HCT116 (cell line): ENCODE measurements at regions of chr10 and their contacts with region 1.

Region 1: DNA sequence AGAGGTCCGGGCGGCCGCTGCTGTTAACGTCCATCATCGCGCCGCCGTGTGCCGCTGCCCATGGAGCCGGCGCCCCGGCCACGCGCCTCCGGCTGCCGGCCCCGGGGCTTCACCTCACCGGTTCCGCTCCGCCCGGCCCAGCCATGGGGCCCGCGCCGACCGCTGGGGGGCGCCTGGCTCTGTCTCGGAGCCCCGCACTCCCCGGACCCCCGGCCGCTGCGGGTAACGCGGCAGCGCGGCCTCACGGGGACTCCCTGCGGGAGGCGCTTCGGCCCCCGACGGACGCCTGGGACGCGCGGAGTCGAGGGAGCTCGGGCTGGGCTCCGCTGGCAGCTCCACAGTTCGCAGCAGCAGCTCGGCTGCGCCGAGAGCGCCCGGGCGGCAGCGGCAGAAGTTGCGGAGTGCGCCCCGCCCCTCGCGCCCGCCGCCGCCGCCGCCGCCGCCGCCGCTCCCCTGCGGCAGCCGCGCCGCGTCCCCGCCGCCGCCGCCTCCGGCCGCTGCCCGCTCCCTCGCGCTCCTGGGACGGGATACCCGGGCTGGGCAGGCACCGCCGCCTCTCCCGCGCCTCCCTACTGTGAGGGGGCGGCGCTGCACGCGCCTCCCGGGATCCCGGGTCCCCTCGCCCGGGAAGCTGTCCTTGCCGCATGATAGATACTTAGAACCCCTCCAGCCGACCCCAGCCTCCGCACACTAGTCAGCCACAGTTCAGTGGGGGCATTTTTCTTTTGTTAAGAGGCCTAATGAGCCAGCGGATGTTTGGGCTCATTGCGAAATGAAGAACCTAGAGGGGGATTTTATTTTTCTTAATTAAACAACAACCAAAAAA is at the start of gene HTR7:
- DNase-seq: no peak
- ATAC-seq: peak; percentile 79
- H3K4me3 ChIP-seq: peak within 1 kb of the TSS; percentile 68 to 76
- H3K27ac ChIP-seq: peak within 1 kb of the TSS; percentile 95
- H3K4me1 ChIP-seq: peaks cover 20 to 39% of the 10 kb centered on the region in 2 experiments
- H3K27me3 ChIP-seq: no peaks in the 10 kb centered on the region
- CTCF ChIP-seq: peak in 2 of 3 experiments; percentile 42 to 64; a peak in 4 of 6 replicates
- POLR2A ChIP-seq: no peak
- RAD21 ChIP-seq: no peak
- total RNA-seq, gene HTR7: 32.2 TPM

Region 2: GRCh38 chr10:89954787-89955566 is 902.9 kb before region 1 on chr10:
- CTCF ChIA-PET with region 1: no interaction called
- POLR2A ChIA-PET with region 1: no interaction called
- RAD21 ChIA-PET with region 1: no interaction called
- intact Hi-C with region 1: loop called (anchors 10 kb)
- DNase-seq: no peak
- ATAC-seq: no peak
- H3K4me3 ChIP-seq: no peak overlapping the region
- H3K27ac ChIP-seq: peak overlapping the region; percentile 31; the same call in 1 of the 2 replicates
- H3K4me1 ChIP-seq: peaks cover 0 to 7% of the 10 kb centered on the region in 2 experiments; a peak in 2 of 4 replicates
- H3K27me3 ChIP-seq: no peaks in the 10 kb centered on the region
- CTCF ChIP-seq: peak; percentile 18 to 64 (median 37); a peak in 4 of 6 replicates
- POLR2A ChIP-seq: no peak
- RAD21 ChIP-seq: peak; percentile 59

Region 3: DNA sequence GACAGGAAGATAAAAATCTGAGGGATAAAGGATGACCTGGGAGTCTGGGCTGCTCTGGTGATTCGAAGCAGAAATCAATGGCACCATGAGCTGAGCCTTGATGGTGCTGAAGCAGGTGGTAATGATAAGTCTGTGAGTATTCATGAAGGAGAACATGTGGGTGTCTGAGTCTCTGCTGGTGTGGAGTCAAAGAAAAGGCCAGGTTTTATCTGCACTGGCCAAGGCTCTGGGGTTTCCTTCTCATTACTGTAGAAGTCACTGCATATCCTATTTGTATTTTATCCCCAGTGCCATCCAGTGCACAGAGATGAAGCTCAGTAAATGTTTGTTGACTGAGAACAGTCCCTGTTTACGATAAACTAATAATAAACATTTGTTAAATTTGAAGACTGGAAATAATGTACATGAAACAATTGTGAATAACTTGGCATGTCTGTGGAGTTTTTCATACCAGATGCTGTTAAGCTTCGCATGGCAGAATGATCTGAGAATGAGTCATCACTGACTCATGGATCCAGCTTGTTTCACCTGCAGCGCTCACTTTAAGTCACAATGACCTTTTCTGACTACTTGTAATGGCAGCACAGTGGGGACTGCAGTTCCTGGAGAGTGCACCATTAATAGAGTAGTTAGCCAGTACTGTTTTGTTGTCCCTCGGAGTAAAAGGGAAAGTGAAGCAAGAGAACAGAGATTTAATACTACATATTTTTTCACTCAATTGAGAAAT is 538.5 kb before region 1 on chr10:
- CTCF ChIA-PET with region 1: no interaction called
- POLR2A ChIA-PET with region 1: no interaction called
- RAD21 ChIA-PET with region 1: no interaction called
- intact Hi-C with region 1: loop called (anchors 10 kb)
- DNase-seq: peak; percentile 96
- ATAC-seq: peak; percentile 87
- H3K4me3 ChIP-seq: no peak overlapping the region
- H3K27ac ChIP-seq: peak overlapping the region; percentile 99
- H3K4me1 ChIP-seq: peaks cover 64 to 74% of the 10 kb centered on the region in 2 experiments
- H3K27me3 ChIP-seq: no peaks in the 10 kb centered on the region
- CTCF ChIP-seq: no peak
- POLR2A ChIP-seq: no peak
- RAD21 ChIP-seq: peak; percentile 39